A673 (cell line): ENCODE measurements at regions of chr7 and their contacts with region 1.

Region 1: GRCh38 chr7:129218514-129219062 is 6.2 kb upstream of the AHCYL2 start:
- DNase-seq: peak; percentile 91
- H3K4me3 ChIP-seq: no peak overlapping the region
- H3K27ac ChIP-seq: no peak overlapping the region
- H3K4me1 ChIP-seq: peaks cover 3% of the 10 kb centered on the region
- H3K27me3 ChIP-seq: no peaks in the 10 kb centered on the region
- CTCF ChIP-seq: peak; percentile 90

Region 2: GRCh38 chr7:128883622-128884501 is 334.7 kb before region 1 on chr7:
- CTCF ChIA-PET with region 1: no interaction called
- POLR2A ChIA-PET with region 1: no interaction called
- intact Hi-C with region 1: no loop called
- DNase-seq: peak; percentile 89
- H3K4me3 ChIP-seq: no peak overlapping the region
- H3K27ac ChIP-seq: no peak overlapping the region
- H3K4me1 ChIP-seq: no peaks in the 10 kb centered on the region
- H3K27me3 ChIP-seq: no peaks in the 10 kb centered on the region
- CTCF ChIP-seq: peak; percentile 97

Region 3: GRCh38 chr7:129271500-129272355 is 53.1 kb after region 1 on chr7:
- CTCF ChIA-PET with region 1: interaction called, 10 read pairs
- POLR2A ChIA-PET with region 1: no interaction called
- intact Hi-C with region 1: loop called (anchors 1 kb)
- DNase-seq: peak; percentile 88
- H3K4me3 ChIP-seq: no peak overlapping the region
- H3K27ac ChIP-seq: no peak overlapping the region
- H3K4me1 ChIP-seq: peaks cover 7% of the 10 kb centered on the region
- H3K27me3 ChIP-seq: no peaks in the 10 kb centered on the region
- CTCF ChIP-seq: peak; percentile 84

Region 4: GRCh38 chr7:129367700-129368388 is 149.3 kb after region 1 on chr7:
- CTCF ChIA-PET with region 1: interaction called, 13 read pairs
- POLR2A ChIA-PET with region 1: no interaction called
- intact Hi-C with region 1: no loop called
- DNase-seq: peak; percentile 93
- H3K4me3 ChIP-seq: peak overlapping the region; percentile 20
- H3K27ac ChIP-seq: peak overlapping the region; percentile 57
- H3K4me1 ChIP-seq: peaks cover 36% of the 10 kb centered on the region
- H3K27me3 ChIP-seq: no peaks in the 10 kb centered on the region
- CTCF ChIP-seq: peak; percentile 95

Region 5: DNA sequence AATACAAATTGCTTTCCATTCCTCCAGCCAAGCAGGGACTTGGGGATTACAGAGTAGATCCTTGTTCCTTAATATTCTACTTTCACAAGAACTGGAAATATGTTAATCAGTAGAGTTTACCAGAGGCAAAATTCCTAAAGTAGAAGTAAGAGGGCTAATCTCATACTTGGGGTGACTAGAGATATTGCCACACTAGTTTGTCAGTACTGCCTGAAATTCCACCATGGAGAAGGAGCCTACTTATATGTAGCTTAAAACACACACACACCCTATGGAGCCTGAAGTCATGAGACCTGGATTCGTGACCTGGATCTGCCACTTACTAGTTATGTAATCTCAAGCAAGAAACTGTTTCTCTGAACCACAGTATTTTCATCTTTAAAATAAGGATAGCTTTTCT is 249.5 kb after region 1 on chr7:
- CTCF ChIA-PET with region 1: interaction called, 3 read pairs
- POLR2A ChIA-PET with region 1: no interaction called
- intact Hi-C with region 1: loop called (anchors 2 kb)
- DNase-seq: no peak
- H3K4me3 ChIP-seq: no peak overlapping the region
- H3K27ac ChIP-seq: peak overlapping the region; percentile 4
- H3K4me1 ChIP-seq: no peaks in the 10 kb centered on the region
- H3K27me3 ChIP-seq: no peaks in the 10 kb centered on the region
- CTCF ChIP-seq: no peak

Region 6: GRCh38 chr7:129825496-129826267 is 607.1 kb after region 1 on chr7:
- CTCF ChIA-PET with region 1: no interaction called
- POLR2A ChIA-PET with region 1: no interaction called
- intact Hi-C with region 1: loop called (anchors 10 kb)
- DNase-seq: peak; percentile 79
- H3K4me3 ChIP-seq: peak overlapping the region; percentile 60
- H3K27ac ChIP-seq: no peak overlapping the region
- H3K4me1 ChIP-seq: peaks cover 10% of the 10 kb centered on the region
- H3K27me3 ChIP-seq: no peaks in the 10 kb centered on the region
- CTCF ChIP-seq: peak; percentile 57